ENCODE measurements at regions of chr1 and their contacts with region 1.

Region 1: DNA sequence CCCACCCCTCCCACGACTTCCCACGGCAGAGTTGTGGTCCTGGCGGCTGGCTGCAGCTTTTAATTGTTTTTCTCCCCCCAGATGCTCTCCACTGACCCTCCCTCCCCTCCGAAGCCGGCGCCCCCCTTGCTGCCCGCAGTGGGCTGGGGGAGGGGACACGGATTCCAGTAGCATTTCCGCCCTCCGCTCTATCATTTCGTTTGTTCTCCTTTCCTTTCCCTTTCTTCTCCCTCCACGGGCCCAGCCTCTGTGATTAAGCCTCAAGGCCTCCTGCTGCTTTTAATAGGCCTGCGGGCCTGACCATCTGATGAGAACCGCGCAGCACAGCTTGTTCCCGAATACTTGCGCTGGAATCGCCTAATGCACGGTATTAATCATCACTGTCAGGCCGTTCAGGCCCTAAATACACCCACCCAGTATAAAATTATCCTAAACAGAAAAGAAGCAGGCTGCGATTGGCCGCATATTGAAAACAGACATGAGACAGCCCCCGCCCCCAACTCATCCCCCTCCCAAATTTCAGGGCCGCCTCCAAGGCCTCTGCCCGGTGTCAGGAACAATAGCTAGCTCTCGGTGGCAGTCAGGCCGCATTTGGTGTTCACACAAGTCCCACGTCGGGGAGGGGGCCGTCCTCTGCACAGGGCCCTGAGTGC is 102.0 kb upstream of the ARHGEF16 start:
- DNase-seq: peak; percentile 80 to 89
- ATAC-seq: peak; percentile 65
- H3K4me3 ChIP-seq: no peak overlapping the region
- H3K27ac ChIP-seq: peak overlapping the region; percentile 93 to 100
- H3K4me1 ChIP-seq: peaks cover 2 to 3% of the 10 kb centered on the region in 2 donors
- H3K27me3 ChIP-seq: no peaks in the 10 kb centered on the region

Region 2: GRCh38 chr1:3186513-3186921 is 165.9 kb before region 1 on chr1:
- intact Hi-C with region 1: loop called (anchors 5 to 10 kb)
- DNase-seq: peak; percentile 95
- ATAC-seq: peak; percentile 83
- H3K4me3 ChIP-seq: no peak overlapping the region
- H3K27ac ChIP-seq: peak overlapping the region; percentile 85 to 89
- H3K4me1 ChIP-seq: no peaks in the 10 kb centered on the region
- H3K27me3 ChIP-seq: no peaks in the 10 kb centered on the region

Region 3: GRCh38 chr1:3192825-3193224 is 159.6 kb before region 1 on chr1:
- intact Hi-C with region 1: loop called (anchors 5 to 10 kb)
- DNase-seq: peak; percentile 78 to 88
- ATAC-seq: no peak
- H3K4me3 ChIP-seq: no peak overlapping the region
- H3K27ac ChIP-seq: peak overlapping the region; percentile 93 to 98
- H3K4me1 ChIP-seq: no peaks in the 10 kb centered on the region
- H3K27me3 ChIP-seq: no peaks in the 10 kb centered on the region

Region 4: DNA sequence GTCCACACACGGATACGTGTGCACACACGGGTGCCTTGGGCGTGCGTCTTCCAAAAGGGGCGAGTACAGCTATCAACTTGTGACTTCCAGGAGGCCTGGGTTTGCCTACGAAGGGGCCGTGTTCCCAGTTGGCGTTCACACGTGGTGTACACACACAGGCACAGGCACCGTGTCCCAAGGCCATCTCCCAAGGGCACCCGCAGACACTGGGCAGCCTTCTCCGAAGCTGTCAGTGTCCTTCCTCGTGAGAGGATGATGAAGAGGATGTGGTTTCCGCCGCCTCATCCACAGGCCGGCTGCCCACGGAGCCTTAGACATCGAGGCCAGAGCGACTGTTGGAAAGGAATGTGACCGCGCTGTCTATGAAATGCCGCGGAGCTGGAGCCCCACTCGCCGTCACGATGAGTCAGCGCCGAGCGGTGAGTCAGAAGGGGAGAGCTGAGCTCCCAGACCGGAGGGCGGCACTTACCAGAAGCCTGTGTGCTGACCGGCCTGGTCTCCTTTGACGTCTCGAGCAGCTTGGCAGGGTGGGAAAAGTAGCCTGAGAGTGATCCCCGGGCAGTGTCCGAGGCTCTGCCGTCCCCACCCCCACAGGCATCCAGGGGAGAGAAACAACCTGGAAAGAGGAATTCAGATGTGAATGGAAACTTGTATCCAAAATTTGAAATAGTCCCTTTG is 39.4 kb before region 1 on chr1:
- intact Hi-C with region 1: loop called (anchors 1 to 5 kb)
- DNase-seq: peak; percentile 98 to 99
- ATAC-seq: peak; percentile 95
- H3K4me3 ChIP-seq: no peak overlapping the region
- H3K27ac ChIP-seq: peak overlapping the region; percentile 91 to 99
- H3K4me1 ChIP-seq: no peaks in the 10 kb centered on the region
- H3K27me3 ChIP-seq: no peaks in the 10 kb centered on the region

Region 5: DNA sequence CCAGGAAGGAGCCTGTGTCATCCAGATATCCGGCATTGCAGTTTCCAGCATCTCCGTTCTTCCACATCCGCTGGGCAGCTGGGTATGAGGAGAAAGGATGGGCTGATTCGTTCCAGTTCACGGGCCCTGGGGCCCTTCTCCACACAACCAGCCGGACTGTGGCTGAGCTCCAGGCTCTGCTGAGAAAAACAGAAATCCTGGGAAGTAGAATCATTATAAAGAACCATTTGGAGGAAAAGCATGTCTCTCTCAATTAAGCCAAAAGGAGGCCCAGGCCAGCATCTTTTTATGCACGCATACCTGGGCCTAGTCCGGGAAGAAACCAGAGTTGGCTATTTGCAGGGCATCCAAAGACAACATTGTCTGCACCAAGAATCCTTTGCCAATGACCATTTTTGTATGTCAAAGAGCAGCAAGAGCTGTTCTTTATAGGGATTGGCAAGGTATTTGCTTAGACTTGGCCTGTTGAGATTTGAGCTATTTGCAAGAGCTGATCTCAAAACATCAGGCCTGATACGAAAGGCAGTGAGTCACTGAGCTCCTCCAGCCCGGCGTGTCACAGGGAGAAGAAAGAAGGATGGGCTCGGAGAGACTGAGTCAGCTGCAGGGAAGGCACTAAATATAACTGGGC is 17.1 kb after region 1 on chr1:
- intact Hi-C with region 1: loop called in 1 of 2 experiments (anchors 2 kb)
- DNase-seq: peak; percentile 89
- ATAC-seq: peak; percentile 84
- H3K4me3 ChIP-seq: no peak overlapping the region
- H3K27ac ChIP-seq: peak overlapping the region; percentile 93 to 99
- H3K4me1 ChIP-seq: peaks cover 8 to 9% of the 10 kb centered on the region in 2 donors
- H3K27me3 ChIP-seq: no peaks in the 10 kb centered on the region

Region 6: GRCh38 chr1:3399732-3400131 is 47.3 kb after region 1 on chr1:
- intact Hi-C with region 1: loop called in 1 of 2 experiments (anchors 5 kb)
- DNase-seq: peak in 1 of 2 donors; percentile 72
- ATAC-seq: no peak
- H3K4me3 ChIP-seq: no peak overlapping the region
- H3K27ac ChIP-seq: peak overlapping the region in 1 of 2 donors; percentile 35
- H3K4me1 ChIP-seq: peaks cover 0 to 5% of the 10 kb centered on the region in 2 donors
- H3K27me3 ChIP-seq: no peaks in the 10 kb centered on the region

Region 7: GRCh38 chr1:3423245-3423829 is 70.9 kb after region 1 on chr1:
- intact Hi-C with region 1: no loop called
- DNase-seq: peak; percentile 88 to 90
- ATAC-seq: peak; percentile 84
- H3K4me3 ChIP-seq: no peak overlapping the region
- H3K27ac ChIP-seq: peak overlapping the region in 1 of 2 donors; percentile 72
- H3K4me1 ChIP-seq: no peaks in the 10 kb centered on the region
- H3K27me3 ChIP-seq: no peaks in the 10 kb centered on the region

Region 8: DNA sequence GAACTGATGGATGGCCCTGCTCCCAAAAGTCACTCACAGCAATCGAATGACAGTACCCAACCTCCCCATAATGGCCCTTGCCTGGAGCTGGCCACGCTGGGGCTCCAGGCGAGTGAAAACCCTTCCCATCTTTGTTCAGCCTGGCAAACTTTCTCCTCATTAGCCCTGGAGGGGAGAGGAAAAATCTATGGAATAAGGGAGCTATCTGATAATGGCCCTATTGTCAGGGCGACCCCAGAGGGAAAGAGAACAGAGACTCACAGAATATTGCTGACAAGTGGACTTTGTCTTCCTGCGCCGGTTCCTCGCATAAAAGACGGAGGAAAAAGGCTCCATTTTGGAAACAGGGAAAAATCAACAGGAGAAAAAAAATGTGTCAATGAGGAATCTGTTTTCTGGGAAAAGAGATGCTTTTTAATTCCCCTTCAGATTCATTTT is 89.0 kb after region 1 on chr1:
- intact Hi-C with region 1: no loop called
- DNase-seq: no peak
- ATAC-seq: no peak
- H3K4me3 ChIP-seq: no peak overlapping the region
- H3K27ac ChIP-seq: no peak overlapping the region
- H3K4me1 ChIP-seq: no peaks in the 10 kb centered on the region
- H3K27me3 ChIP-seq: no peaks in the 10 kb centered on the region